H1 (cell line): ENCODE measurements at regions of chr3 and their contacts with region 1.

Region 1: DNA sequence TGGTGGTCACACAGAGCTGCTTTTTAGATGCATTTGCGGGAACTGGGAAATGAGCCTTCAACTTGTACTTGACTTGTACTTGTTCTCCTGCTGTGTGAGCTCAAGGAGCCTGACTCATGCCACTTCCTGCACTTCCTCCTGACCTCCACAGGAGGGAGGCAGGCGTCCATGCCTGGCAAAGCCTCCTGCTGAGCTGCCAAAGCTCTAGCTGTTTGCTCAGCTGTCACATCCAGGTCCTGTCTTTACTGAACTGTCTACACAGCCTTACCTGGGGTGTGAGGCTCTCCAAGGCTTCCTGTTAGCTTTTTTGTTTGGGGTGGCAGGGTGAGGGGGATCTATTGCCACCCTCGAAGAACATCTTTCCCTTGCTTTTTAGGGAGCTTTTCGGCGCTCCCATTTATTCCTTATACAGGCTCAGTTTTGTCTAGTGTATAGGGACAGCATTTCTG is 6.4 kb downstream of the THPO start:
- DNase-seq: peak; percentile 77 to 79
- H3K4me3 ChIP-seq: no peak overlapping the region
- H3K27ac ChIP-seq: no peak overlapping the region
- H3K4me1 ChIP-seq: peaks cover 3 to 8% (median 6%) of the 10 kb centered on the region in 4 experiments; a peak in 6 of 7 replicates
- H3K27me3 ChIP-seq: no peaks in the 10 kb centered on the region; a peak in 1 of 7 replicates
- CTCF ChIP-seq: peak; percentile 91 to 97 (median 96)
- EP300 ChIP-seq: no peak
- POLR2A ChIP-seq: no peak
- RAD21 ChIP-seq: peak; percentile 99

Region 2: DNA sequence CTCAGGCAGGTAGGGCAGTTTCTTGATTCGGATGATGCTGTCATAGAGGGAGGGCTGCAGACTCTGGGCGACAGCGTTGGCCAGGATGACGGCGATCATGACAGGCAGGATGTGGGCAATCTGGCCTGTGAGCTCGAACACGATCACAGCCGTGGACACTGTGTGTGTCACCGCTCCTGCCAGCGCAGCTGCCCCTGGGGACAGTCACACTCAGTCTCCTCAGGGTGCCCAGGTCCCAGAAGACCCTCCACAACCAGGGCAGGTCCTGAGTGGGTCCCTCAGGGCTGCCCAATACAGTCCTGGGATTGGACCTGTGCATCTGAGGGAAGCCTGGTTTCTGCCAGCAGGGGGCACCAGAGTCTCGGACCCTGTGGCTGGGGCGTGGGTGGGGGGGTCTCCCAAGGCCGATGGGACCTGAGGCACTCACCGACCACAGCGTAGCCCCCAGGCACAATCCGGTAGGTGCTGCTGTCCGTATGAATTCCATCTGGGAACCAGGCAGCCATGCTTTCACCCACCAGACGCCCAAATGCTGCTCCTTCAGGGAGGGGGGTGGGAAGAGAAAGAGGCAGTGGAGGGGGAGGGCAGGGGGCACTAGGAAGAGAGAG is 17.4 kb before region 1 on chr3:
- CTCF ChIA-PET with region 1: interaction called, 24 read pairs
- POLR2A ChIA-PET with region 1: interaction called, 3 read pairs
- DNase-seq: peak in 1 of 2 experiments; percentile 85
- H3K4me3 ChIP-seq: no peak overlapping the region
- H3K27ac ChIP-seq: no peak overlapping the region
- H3K4me1 ChIP-seq: peaks cover 0 to 7% (median 3%) of the 10 kb centered on the region in 4 experiments; a peak in 2 of 7 replicates
- H3K27me3 ChIP-seq: no peaks in the 10 kb centered on the region
- CTCF ChIP-seq: peak in 2 of 3 experiments; percentile 60 to 74; a peak in 3 of 4 replicates
- EP300 ChIP-seq: no peak
- POLR2A ChIP-seq: no peak
- RAD21 ChIP-seq: peak; percentile 37 to 58; a peak in 3 of 4 replicates

Region 3: DNA sequence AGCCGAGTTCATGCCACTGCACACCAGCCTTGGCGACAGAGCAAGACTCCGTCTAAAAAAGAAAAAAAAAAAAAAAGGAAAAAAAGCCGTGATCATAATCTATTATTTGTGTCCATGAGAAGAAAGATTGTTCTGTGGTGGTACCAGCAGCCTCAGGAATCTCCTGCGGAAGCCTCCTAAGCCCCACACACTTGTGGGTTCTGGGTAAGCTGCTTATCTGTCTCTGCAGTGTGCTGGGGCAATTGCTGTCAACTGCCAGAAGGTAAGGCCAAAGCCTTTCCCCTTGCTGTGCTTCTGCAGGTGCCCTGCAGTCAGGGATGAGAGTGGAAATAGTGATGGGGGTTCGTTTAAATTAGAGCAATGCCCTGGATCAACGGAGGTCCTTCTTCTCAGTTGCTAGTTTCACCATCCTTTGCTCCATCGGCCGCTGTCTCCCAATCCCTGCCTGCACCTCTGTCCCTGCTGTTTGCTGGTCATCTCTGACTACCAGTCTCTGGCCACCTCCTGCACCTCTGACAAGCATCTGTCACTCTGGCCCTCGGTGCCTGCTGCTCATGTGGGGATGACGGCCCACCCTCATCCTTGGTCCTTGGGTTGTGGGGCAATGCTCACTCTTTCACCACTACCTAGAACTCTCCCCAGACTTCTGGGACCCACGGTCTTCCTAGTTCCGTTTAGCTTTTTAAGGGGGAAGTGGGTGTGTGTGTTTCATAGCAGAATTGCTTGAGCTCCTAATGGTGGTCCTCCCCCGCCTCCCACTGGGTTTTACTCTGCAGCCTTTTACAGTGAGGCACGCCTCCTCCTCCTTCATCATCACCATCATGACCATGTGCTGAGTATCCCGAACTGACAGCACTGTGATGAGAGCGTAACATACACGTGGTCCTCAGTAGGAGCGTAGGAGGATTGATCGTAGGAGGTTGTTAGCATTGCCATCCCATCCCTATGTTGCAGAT is 33.8 kb after region 1 on chr3:
- CTCF ChIA-PET with region 1: interaction called, 14 read pairs
- POLR2A ChIA-PET with region 1: interaction called, 3 read pairs
- DNase-seq: no peak
- H3K4me3 ChIP-seq: no peak overlapping the region
- H3K27ac ChIP-seq: no peak overlapping the region
- H3K4me1 ChIP-seq: no peaks in the 10 kb centered on the region
- H3K27me3 ChIP-seq: peaks cover 0 to 2% (median 0%) of the 10 kb centered on the region in 4 experiments; a peak in 1 of 7 replicates
- CTCF ChIP-seq: no peak
- EP300 ChIP-seq: no peak
- POLR2A ChIP-seq: no peak
- RAD21 ChIP-seq: no peak

Region 4: GRCh38 chr3:184448311-184449160 is 76.9 kb after region 1 on chr3:
- CTCF ChIA-PET with region 1: interaction called, 12 read pairs
- POLR2A ChIA-PET with region 1: interaction called, 3 read pairs
- DNase-seq: no peak
- H3K4me3 ChIP-seq: no peak overlapping the region
- H3K27ac ChIP-seq: no peak overlapping the region
- H3K4me1 ChIP-seq: no peaks in the 10 kb centered on the region
- H3K27me3 ChIP-seq: no peaks in the 10 kb centered on the region
- CTCF ChIP-seq: no peak
- EP300 ChIP-seq: no peak
- POLR2A ChIP-seq: no peak
- RAD21 ChIP-seq: no peak

Region 5: DNA sequence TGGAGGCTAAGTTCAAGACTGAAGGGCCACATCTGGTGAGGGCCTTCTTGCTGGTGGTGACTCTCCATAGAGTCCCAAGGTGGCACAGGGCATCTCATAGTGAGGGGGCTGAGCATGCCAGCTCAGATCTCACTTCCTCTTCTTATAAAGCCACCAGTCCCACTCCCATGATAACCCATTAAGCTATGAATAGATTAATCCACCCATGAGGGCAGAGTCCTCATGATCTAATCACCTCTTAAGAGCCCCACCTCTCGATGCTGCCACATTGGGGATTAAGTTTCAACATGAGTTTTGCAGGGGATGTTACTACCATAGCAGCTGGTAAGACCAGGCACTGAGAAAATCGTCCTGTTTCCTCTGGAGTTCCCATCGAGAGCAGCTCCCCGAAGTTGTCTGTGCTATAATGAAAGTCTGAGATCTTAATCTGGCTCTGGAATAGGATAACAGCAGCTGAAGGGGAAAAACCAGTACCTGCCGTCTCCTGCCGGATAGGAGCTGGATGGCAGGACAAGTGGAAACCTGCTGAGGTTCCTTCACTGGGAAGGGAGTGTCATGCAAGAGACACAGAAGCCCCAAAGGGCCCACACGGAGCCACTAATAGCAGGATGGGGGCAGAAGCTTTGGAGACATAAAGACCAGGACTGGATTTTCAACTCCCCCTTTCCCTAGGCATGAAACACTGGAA is 110.5 kb after region 1 on chr3:
- CTCF ChIA-PET with region 1: interaction called, 23 read pairs
- POLR2A ChIA-PET with region 1: no interaction called
- DNase-seq: no peak
- H3K4me3 ChIP-seq: no peak overlapping the region
- H3K27ac ChIP-seq: no peak overlapping the region
- H3K4me1 ChIP-seq: no peaks in the 10 kb centered on the region
- H3K27me3 ChIP-seq: no peaks in the 10 kb centered on the region
- CTCF ChIP-seq: no peak
- EP300 ChIP-seq: no peak
- POLR2A ChIP-seq: no peak
- RAD21 ChIP-seq: no peak

Region 6: DNA sequence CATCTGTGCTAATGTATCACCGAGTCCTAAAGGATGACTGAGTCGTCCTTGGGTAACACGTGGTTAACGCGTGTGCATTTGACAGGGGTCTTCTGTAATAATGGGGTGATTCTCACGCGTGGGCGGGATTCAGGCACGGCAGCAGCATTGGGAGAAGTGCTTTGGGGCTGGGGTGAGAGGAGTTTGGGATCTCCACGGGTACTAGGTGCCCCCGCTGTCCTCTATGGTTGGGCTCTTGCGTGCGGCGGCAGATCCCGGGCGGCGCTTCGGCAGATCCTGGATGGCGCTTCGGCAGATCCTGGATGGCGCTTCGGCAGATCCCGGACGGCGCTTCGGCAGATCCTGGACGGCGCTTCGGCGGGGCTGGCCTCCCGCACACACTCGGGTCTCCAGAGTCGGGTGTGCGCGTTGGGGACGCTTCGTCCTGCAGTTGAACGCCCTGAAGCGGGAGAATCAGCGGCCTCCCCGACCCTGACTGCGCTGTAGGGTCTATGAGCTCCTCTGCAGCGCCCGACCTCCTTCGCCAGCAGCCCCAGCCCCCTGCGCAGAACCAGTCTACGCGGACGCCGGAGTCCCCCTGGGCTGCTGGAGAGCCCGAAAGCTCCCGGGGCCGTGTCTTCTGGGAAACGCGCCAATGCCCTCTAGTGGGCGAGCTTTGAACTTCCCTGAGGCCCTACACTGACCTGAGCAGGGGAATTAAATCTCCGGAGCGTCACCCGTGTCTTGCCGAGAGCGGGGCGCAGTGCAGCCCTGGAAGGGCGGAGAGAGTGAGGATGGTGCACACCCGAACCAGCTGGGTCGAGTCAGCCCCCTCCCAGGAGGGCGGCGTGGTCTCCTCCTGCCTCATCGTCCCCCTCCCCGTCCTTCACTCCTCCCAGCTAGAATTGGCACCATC is 141.9 kb after region 1 on chr3:
- CTCF ChIA-PET with region 1: interaction called, 50 read pairs
- POLR2A ChIA-PET with region 1: interaction called, 4 read pairs
- DNase-seq: peak; percentile 75 to 95
- H3K4me3 ChIP-seq: peak overlapping the region; percentile 13 to 61 (median 50)
- H3K27ac ChIP-seq: no peak overlapping the region
- H3K4me1 ChIP-seq: peaks cover 0 to 5% (median 1%) of the 10 kb centered on the region in 4 experiments; a peak in 2 of 7 replicates
- H3K27me3 ChIP-seq: peaks cover 10 to 27% (median 17%) of the 10 kb centered on the region in 4 experiments
- CTCF ChIP-seq: peak; percentile 75 to 86 (median 79)
- EP300 ChIP-seq: no peak
- POLR2A ChIP-seq: no peak
- RAD21 ChIP-seq: peak; percentile 81 to 86

Region 7: GRCh38 chr3:184543843-184544512 is 172.4 kb after region 1 on chr3:
- CTCF ChIA-PET with region 1: interaction called, 223 read pairs
- POLR2A ChIA-PET with region 1: interaction called, 4 read pairs
- DNase-seq: peak in 1 of 2 experiments; percentile 94
- H3K4me3 ChIP-seq: no peak overlapping the region
- H3K27ac ChIP-seq: no peak overlapping the region
- H3K4me1 ChIP-seq: peaks cover 0 to 5% (median under 1%) of the 10 kb centered on the region in 4 experiments; a peak in 3 of 7 replicates
- H3K27me3 ChIP-seq: peaks cover 0 to 3% (median 0%) of the 10 kb centered on the region in 4 experiments; a peak in 1 of 7 replicates
- CTCF ChIP-seq: peak; percentile 56 to 94 (median 81)
- EP300 ChIP-seq: no peak
- POLR2A ChIP-seq: no peak
- RAD21 ChIP-seq: peak; percentile 94 to 96

Region 8: DNA sequence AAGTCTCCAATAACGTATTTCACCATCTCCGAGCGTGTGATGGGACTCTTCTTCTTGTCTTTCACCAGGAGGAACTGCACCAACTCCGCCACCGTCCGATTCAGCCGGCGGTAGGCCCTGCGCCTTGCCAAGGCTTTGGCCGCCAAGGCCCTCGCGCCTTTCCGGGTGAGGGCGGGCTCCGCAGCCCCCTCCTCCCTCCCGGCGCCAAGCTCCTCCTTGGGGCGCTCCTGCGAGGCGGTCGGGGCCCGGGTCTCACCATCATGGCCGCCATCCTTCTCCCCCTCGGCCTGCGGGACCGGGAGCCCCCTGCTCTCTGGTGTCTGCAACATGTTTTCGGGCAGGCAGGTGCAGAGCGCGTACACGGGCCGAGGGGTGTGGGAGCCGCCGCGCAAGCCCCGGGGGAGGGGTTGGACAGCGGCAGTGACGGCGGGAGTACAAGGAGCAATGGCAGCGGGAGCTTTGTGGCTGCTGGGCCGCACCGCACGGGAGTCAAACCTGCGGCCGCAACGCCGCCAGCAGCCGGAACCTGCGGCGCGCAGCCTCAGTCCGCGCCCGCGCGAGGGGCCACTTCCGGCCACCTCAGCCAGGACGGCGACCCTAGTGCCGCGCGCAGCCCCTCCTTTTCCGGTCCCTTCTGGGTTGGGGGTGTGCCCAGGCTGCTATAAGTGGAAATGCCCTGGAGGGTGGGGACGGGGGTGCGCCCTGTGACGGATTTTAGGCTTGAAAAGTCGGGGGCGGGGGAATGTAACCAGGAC is 340.1 kb after region 1 on chr3 and contains the start of gene MAGEF1:
- CTCF ChIA-PET with region 1: no interaction called
- POLR2A ChIA-PET with region 1: no interaction called
- DNase-seq: peak; percentile 67 to 89
- H3K4me3 ChIP-seq: peak within 1 kb of the TSS; percentile 86 to 98 (median 90)
- H3K27ac ChIP-seq: peak within 1 kb of the TSS; percentile 97
- H3K4me1 ChIP-seq: peaks cover 2 to 10% (median 4%) of the 10 kb centered on the region in 4 experiments; a peak in 6 of 7 replicates
- H3K27me3 ChIP-seq: no peaks in the 10 kb centered on the region
- CTCF ChIP-seq: no peak
- EP300 ChIP-seq: no peak; a peak in 1 of 3 replicates
- POLR2A ChIP-seq: peak; percentile 91
- RAD21 ChIP-seq: peak; percentile 7 to 18; a peak in 2 of 4 replicates
- total RNA-seq, gene MAGEF1: 54.1 and 56.7 TPM in 2 replicates